ENCODE measurements at regions of chr9 and their contacts with region 1.

Region 1: GRCh38 chr9:130712564-130713285 is 19.1 kb downstream of the EXOSC2 start:
- DNase-seq: peak; percentile 98 to 99
- ATAC-seq: peak; percentile 99
- H3K4me3 ChIP-seq: peak overlapping the region; percentile 90
- H3K27ac ChIP-seq: peak overlapping the region; percentile 95 to 99 (median 98)
- H3K4me1 ChIP-seq: peaks cover 24 to 26% of the 10 kb centered on the region in 2 donors
- H3K27me3 ChIP-seq: no peaks in the 10 kb centered on the region
- CTCF ChIP-seq: peak in 1 of 5 experiments; percentile 25
- POLR2A ChIP-seq: peak; percentile 56 to 85

Region 2: GRCh38 chr9:130682490-130683121 is 30.1 kb before region 1 on chr9:
- in situ Hi-C with region 1: no loop called
- intact Hi-C with region 1: loop called (anchors 1 kb)
- DNase-seq: peak; percentile 54 to 68
- ATAC-seq: peak; percentile 53 to 68
- H3K4me3 ChIP-seq: peak overlapping the region; percentile 65 to 88 (median 66)
- H3K27ac ChIP-seq: peak overlapping the region in 2 of 4 donors; percentile 57 to 71
- H3K4me1 ChIP-seq: peaks cover 6 to 8% of the 10 kb centered on the region in 2 donors
- H3K27me3 ChIP-seq: no peaks in the 10 kb centered on the region
- CTCF ChIP-seq: peak; percentile 62 to 90 (median 78)
- POLR2A ChIP-seq: no peak

Region 3: DNA sequence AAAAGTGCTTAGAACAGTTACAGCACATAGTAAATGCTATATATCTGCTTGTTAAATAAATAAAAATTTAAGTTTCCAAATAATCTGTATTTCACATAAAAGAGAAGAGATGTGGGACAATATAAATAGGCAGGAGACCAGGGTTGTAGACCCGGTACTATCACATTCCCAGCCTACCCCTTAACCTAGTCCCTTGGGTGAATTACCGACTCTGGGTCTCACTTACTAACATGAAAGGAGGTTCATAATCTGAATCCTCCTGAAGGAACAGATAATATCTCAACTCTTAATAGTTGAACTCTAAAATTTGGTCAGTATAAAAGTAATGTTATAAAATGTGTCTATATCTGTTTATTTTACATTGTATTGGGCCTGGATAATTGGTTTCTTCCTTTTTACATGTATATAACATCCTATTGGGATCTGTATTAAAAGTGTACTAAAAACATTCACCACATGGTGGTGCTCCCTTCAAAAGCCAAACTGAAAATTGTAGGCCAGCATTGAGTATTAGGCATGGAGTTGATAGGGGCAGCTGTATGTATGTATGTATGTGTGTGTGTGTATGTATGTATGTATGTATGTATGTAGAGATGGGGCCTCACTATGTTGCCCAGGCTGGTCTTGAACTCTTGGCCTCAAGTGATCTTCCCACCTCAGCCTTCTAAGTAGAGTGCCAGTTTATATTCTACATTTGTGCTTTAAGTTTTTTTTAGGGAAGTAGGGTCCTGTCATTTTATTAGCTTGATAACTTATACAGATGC is 58.1 kb after region 1 on chr9:
- in situ Hi-C with region 1: loop called in 1 of 4 experiments (anchors 10 kb)
- intact Hi-C with region 1: loop called (anchors 5 kb)
- DNase-seq: no peak
- ATAC-seq: peak; percentile 74 to 77
- H3K4me3 ChIP-seq: no peak overlapping the region
- H3K27ac ChIP-seq: no peak overlapping the region
- H3K4me1 ChIP-seq: peaks cover 10 to 15% of the 10 kb centered on the region in 2 donors
- H3K27me3 ChIP-seq: no peaks in the 10 kb centered on the region
- CTCF ChIP-seq: peak; percentile 58 to 67 (median 60)
- POLR2A ChIP-seq: no peak

Region 4: GRCh38 chr9:130834371-130835311 is 121.9 kb after region 1 on chr9 and contains the start of gene ABL1:
- in situ Hi-C with region 1: no loop called
- intact Hi-C with region 1: loop called (anchors 10 kb)
- DNase-seq: peak; percentile 48 to 63
- ATAC-seq: peak; percentile 81 to 82
- H3K4me3 ChIP-seq: peak within 1 kb of the TSS; percentile 72 to 79 (median 75)
- H3K27ac ChIP-seq: peak within 1 kb of the TSS; percentile 86 to 90 (median 88)
- H3K4me1 ChIP-seq: peaks cover 56 to 68% of the 10 kb centered on the region in 2 donors
- H3K27me3 ChIP-seq: no peaks in the 10 kb centered on the region
- CTCF ChIP-seq: peak in 1 of 5 experiments; percentile 14
- POLR2A ChIP-seq: peak in 1 of 2 donors; percentile 9
- total RNA-seq, gene ABL1: 22.8 to 55.5 (median 28.5) TPM